H1 (cell line): ENCODE measurements at regions of chr4 and their contacts with region 1.

Region 1: DNA sequence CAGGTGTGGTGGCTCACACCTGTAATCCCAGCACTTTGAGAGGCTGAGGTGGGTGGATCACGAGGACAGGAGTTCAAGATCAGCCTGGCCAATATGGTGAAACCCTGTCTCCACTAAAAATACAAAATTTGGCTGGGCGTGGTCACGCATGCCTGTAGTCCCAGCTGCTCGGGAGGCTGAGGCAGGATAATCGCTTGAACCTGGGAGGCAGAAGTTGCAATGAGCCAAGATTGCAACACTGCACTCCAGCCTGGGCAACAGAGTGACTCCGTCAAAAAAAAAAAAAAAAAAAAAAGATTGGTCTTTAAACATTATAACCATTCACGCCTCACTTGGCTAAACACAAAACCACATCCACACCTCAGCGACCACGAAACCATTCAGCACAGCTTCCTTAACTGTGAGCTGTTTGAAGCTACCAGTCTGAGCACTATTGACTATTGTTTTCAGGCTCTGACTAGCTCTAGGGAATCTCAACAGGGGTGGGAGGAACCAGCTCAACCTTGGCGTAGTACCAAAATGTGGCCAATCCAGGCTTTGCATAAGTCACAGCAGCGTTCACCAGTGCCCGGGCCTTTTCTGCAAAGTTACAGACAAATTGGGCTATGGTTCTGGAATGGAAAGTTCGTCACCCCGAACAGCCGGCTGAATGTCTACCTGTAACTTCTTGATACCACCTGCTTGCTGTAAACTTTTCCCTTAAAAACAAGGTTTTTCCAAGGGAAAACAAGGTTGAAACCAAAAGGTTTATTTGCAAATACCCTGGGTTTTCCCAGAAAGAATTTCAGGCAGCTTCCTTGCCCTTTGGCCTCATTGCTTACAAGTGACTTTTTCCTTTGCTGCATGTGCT is 73.6 kb upstream of the DHX15 start:
- DNase-seq: no peak
- H3K4me3 ChIP-seq: peak overlapping the region in 1 of 4 experiments; percentile 3; a peak in 1 of 8 replicates
- H3K27ac ChIP-seq: no peak overlapping the region; the same call in 1 of the 2 replicates
- H3K4me1 ChIP-seq: peaks cover 7 to 42% (median 32%) of the 10 kb centered on the region in 4 experiments
- H3K27me3 ChIP-seq: no peaks in the 10 kb centered on the region; a peak in 1 of 7 replicates
- CTCF ChIP-seq: no peak
- EP300 ChIP-seq: no peak
- POLR2A ChIP-seq: no peak
- RAD21 ChIP-seq: no peak

Region 2: GRCh38 chr4:24578364-24578763 is 79.6 kb before region 1 on chr4:
- CTCF ChIA-PET with region 1: interaction called, 3 read pairs
- POLR2A ChIA-PET with region 1: interaction called, 40 read pairs
- DNase-seq: no peak
- H3K4me3 ChIP-seq: no peak overlapping the region
- H3K27ac ChIP-seq: no peak overlapping the region
- H3K4me1 ChIP-seq: peaks cover 0 to 15% (median 3%) of the 10 kb centered on the region in 4 experiments; a peak in 3 of 7 replicates
- H3K27me3 ChIP-seq: no peaks in the 10 kb centered on the region
- CTCF ChIP-seq: no peak
- EP300 ChIP-seq: no peak
- POLR2A ChIP-seq: no peak
- RAD21 ChIP-seq: no peak

Region 3: DNA sequence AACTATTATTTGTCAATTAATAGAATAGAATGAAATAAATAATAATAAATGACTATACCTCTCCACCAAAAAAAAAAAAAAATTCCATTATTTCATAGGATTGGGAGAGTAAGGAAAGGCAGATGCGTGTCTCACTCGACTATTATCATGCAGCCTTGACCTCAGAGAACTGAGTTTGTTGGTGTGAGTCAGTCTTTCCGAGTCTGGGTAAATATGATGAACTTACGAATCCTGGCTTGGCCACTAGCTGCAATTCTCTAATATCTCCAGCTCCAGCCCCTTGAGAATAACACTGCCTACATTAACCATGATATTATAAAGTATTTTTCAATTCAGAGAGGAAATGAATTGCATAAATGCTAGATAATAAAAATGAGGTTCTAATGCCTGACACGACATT is 27.1 kb before region 1 on chr4:
- CTCF ChIA-PET with region 1: no interaction called
- POLR2A ChIA-PET with region 1: no interaction called
- DNase-seq: no peak
- H3K4me3 ChIP-seq: no peak overlapping the region
- H3K27ac ChIP-seq: no peak overlapping the region
- H3K4me1 ChIP-seq: no peaks in the 10 kb centered on the region
- H3K27me3 ChIP-seq: no peaks in the 10 kb centered on the region
- CTCF ChIP-seq: no peak
- EP300 ChIP-seq: no peak
- POLR2A ChIP-seq: no peak
- RAD21 ChIP-seq: no peak